ENCODE measurements at regions of chr3 and their contacts with region 1.

Region 1: DNA sequence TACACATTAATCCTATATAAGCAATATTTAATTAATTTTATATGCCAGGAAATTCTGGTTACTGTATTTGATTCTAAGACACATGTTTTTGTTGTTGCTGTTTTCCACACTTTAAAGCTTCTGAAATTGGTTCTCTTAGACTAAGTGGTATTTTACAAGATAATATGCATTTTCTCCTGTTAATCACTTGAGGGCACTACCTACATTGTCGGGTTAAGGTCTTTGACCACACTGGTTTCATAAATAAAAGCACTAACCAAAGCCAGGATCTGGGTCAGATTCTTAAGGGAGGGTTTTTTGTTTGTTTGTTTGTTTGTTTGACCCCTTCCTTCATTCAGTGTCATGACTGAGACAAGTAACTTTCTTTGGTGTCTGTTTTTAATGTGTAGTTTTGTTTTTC is 590.2 kb downstream of the RBMS3 start:
- DNase-seq: peak; percentile 46
- ATAC-seq: peak; percentile 78
- H3K4me3 ChIP-seq: no peak overlapping the region
- H3K27ac ChIP-seq: no peak overlapping the region
- H3K4me1 ChIP-seq: no peaks in the 10 kb centered on the region
- H3K27me3 ChIP-seq: no peaks in the 10 kb centered on the region
- CTCF ChIP-seq: peak; percentile 61

Region 2: GRCh38 chr3:29889215-29889614 is 18.1 kb after region 1 on chr3:
- CTCF ChIA-PET with region 1: no interaction called
- POLR2A ChIA-PET with region 1: no interaction called
- intact Hi-C with region 1: no loop called
- DNase-seq: no peak
- ATAC-seq: peak; percentile 40; the same call in 1 of the 2 replicates
- H3K4me3 ChIP-seq: no peak overlapping the region
- H3K27ac ChIP-seq: no peak overlapping the region
- H3K4me1 ChIP-seq: no peaks in the 10 kb centered on the region
- H3K27me3 ChIP-seq: no peaks in the 10 kb centered on the region
- CTCF ChIP-seq: no peak

Region 3: DNA sequence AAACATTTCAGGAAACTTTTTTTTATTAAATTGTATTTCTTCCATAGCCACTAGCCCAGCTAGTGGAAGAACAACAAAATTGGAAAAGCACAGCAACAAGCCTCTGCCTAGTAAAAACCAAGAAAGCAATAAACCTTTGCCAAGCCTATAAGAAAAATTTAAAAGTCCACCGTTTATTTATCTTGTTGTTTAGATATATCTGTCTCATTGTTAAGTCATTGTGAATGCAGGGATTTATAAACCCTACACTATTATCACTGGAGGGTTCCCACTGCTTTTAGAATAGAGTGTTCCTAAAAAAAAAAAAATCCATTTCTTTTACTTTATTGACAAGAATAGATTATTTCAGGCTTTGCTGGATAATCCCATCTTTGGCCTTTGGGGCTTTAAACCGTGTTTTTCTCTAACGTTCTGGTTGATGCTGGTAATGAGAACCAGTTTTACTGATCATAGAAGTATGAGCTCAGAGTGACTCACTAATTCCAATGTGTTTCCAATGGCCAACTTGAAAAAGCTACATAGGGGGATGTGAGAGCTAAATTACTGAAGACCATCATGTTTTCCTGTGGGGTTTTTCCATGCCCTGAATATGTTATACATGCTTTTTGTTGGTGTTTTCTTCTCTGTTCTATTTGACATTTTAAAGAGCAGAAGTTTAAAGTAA is 43.9 kb after region 1 on chr3:
- CTCF ChIA-PET with region 1: no interaction called
- POLR2A ChIA-PET with region 1: no interaction called
- intact Hi-C with region 1: loop called (anchors 5 kb)
- DNase-seq: peak; percentile 85
- ATAC-seq: peak; percentile 42
- H3K4me3 ChIP-seq: peak overlapping the region; percentile 13; the same call in 1 of the 2 replicates
- H3K27ac ChIP-seq: peak overlapping the region; percentile 84
- H3K4me1 ChIP-seq: peaks cover 55% of the 10 kb centered on the region
- H3K27me3 ChIP-seq: no peaks in the 10 kb centered on the region
- CTCF ChIP-seq: no peak

Region 4: GRCh38 chr3:29978036-29978435 is 106.9 kb after region 1 on chr3:
- CTCF ChIA-PET with region 1: no interaction called
- POLR2A ChIA-PET with region 1: interaction called, 19 read pairs
- intact Hi-C with region 1: no loop called
- DNase-seq: peak; percentile 11
- ATAC-seq: no peak; the same call in 1 of the 2 replicates
- H3K4me3 ChIP-seq: no peak overlapping the region
- H3K27ac ChIP-seq: no peak overlapping the region
- H3K4me1 ChIP-seq: no peaks in the 10 kb centered on the region
- H3K27me3 ChIP-seq: no peaks in the 10 kb centered on the region
- CTCF ChIP-seq: no peak

Region 5: DNA sequence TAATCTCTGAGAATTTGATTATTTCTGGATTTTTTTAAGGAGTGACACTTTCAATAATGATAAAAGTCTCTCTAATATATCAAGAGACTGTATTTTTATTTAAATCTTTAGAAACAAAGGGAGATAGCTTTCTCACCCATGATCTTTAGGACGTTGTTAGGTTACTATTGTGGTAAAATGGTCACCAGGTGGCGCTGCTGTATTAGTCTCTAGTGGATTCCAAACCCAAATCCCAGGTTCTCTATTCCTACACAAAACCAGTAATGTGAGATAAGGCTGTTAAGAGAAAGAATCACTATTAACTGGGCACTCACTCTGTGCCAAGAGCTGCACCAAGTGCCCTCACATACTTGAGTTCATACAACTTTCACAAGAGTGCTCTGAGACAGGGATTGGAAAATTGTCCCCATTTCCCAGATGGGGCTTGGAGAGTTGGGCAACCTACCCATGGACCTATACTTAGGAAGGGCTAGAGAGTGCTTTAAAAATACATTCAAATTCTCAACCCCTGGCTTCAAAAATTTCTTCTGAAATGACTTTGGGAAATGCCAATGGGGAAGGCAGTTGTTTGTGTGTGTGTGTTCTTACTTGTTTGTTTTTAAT is 142.0 kb after region 1 on chr3:
- CTCF ChIA-PET with region 1: no interaction called
- POLR2A ChIA-PET with region 1: no interaction called
- intact Hi-C with region 1: loop called (anchors 1 kb)
- DNase-seq: peak; percentile 92
- ATAC-seq: peak; percentile 89
- H3K4me3 ChIP-seq: no peak overlapping the region
- H3K27ac ChIP-seq: no peak overlapping the region
- H3K4me1 ChIP-seq: peaks cover 8% of the 10 kb centered on the region
- H3K27me3 ChIP-seq: no peaks in the 10 kb centered on the region
- CTCF ChIP-seq: peak; percentile 94

Region 6: GRCh38 chr3:30042274-30042859 is 171.3 kb after region 1 on chr3:
- CTCF ChIA-PET with region 1: no interaction called
- POLR2A ChIA-PET with region 1: no interaction called
- intact Hi-C with region 1: loop called (anchors 1 kb)
- DNase-seq: peak; percentile 84
- ATAC-seq: peak; percentile 87
- H3K4me3 ChIP-seq: no peak overlapping the region
- H3K27ac ChIP-seq: no peak overlapping the region
- H3K4me1 ChIP-seq: no peaks in the 10 kb centered on the region
- H3K27me3 ChIP-seq: no peaks in the 10 kb centered on the region
- CTCF ChIP-seq: peak; percentile 93

Region 7: DNA sequence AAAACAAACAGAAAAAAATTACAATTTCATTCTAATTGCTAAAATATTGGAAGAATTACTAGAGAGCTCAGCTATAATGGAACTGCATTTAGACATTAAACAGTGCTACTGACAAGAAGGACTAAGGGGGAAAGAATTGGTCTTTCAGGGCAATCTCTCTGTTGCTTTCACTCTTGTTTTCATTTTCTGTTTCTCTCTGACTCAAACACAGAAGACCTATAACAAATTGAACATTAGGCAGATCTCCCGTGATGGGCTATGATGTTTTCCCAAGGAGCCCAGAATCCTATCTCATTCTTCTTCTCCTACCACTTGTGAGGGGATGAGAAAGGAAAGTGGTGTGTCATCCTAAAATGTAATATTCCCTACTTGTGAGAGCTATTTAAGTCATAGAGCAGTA is 377.3 kb after region 1 on chr3:
- CTCF ChIA-PET with region 1: no interaction called
- POLR2A ChIA-PET with region 1: no interaction called
- intact Hi-C with region 1: no loop called
- DNase-seq: no peak
- ATAC-seq: no peak
- H3K4me3 ChIP-seq: no peak overlapping the region
- H3K27ac ChIP-seq: no peak overlapping the region
- H3K4me1 ChIP-seq: peaks cover 13% of the 10 kb centered on the region; the same call in 1 of the 2 replicates
- H3K27me3 ChIP-seq: no peaks in the 10 kb centered on the region
- CTCF ChIP-seq: no peak

Region 8: DNA sequence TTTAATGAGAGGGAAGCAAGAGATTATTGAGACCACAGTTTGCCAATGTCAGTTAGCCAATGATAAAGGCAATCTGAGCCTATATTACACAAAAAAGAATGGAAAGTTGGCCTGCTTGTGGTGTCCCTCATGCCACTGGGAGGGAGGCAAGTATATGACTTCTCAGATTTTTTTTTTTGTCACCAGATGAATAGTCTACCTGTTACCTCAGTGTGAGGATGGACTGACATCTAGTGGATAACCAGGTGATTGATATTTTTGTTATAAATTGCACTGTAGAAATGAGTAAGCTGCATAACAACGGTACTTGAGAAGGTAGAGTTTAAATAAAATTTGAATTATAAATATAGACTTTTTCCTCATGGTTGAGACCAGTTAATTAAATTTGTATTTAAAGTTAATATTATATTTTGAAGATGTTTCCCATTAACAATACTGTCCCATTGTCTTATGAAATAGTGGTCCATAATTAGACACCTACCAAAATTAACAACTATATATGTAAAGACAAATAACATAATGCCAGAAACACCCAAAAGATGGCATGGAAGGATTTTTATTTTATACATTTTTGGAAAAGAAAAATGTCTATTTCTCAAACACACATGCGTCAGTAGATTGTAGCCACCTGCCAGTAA is 1261.2 kb after region 1 on chr3:
- CTCF ChIA-PET with region 1: no interaction called
- POLR2A ChIA-PET with region 1: no interaction called
- intact Hi-C with region 1: no loop called
- DNase-seq: peak; percentile 76
- ATAC-seq: peak; percentile 64
- H3K4me3 ChIP-seq: no peak overlapping the region
- H3K27ac ChIP-seq: no peak overlapping the region
- H3K4me1 ChIP-seq: no peaks in the 10 kb centered on the region
- H3K27me3 ChIP-seq: no peaks in the 10 kb centered on the region
- CTCF ChIP-seq: peak; percentile 91